CD4-positive, alpha-beta T cell (primary cell): ENCODE measurements at regions of chr5 and their contacts with region 1.

Region 1: GRCh38 chr5:52787600-52788504 is at the starts of genes ITGA1 and PELO:
- DNase-seq: peak in 12 of 14 experiments; percentile 8 to 84 (median 25)
- ATAC-seq: peak; percentile 72
- H3K4me3 ChIP-seq: peak within 1 kb of the TSS; percentile 76
- H3K4me3 Mint-ChIP-seq: peak within 1 kb of the TSS; percentile 89
- H3K27ac ChIP-seq: no peak within 1 kb of the TSS
- H3K27ac Mint-ChIP-seq: peak within 1 kb of the TSS; percentile 16
- H3K4me1 ChIP-seq: peaks cover 18% of the 10 kb centered on the region
- H3K4me1 Mint-ChIP-seq: peaks cover 17% of the 10 kb centered on the region
- H3K27me3 ChIP-seq: peaks cover 0 to 5% of the 10 kb centered on the region in 2 experiments
- H3K27me3 Mint-ChIP-seq: peaks cover 37% of the 10 kb centered on the region
- CTCF ChIP-seq: no peak
- total RNA-seq, gene ITGA1: 0.74 to 1.3 TPM
- total RNA-seq, gene PELO: 4.3 to 4.5 TPM

Region 2: DNA sequence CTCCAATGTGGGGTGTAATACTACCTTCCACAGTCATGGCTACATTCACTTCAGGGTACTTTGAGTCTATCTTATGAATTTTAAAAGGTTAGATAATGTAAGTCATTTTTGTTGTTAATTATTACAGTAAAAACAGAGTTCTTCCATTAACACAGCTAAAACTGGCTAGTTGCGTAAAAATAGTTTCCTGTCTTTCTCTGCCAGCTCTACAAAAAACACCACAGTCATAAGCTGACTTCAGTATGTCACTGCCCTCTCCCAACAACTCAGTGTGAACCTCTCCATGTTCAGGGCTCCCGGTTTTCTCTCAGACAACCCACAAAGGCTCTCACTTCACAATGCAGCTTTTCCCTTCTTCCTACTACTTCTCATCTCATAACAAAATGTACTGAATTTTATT is 85.0 kb before region 1 on chr5:
- CTCF ChIA-PET with region 1: no interaction called
- POLR2A ChIA-PET with region 1: no interaction called
- intact Hi-C with region 1: loop called in 1 of 2 experiments (anchors 5 kb)
- DNase-seq: no peak
- ATAC-seq: no peak
- H3K4me3 ChIP-seq: no peak overlapping the region
- H3K4me3 Mint-ChIP-seq: no peak overlapping the region
- H3K27ac ChIP-seq: no peak overlapping the region
- H3K27ac Mint-ChIP-seq: no peak overlapping the region
- H3K4me1 ChIP-seq: peaks cover 8% of the 10 kb centered on the region
- H3K4me1 Mint-ChIP-seq: peaks cover 20% of the 10 kb centered on the region
- H3K27me3 ChIP-seq: no peaks in the 10 kb centered on the region
- H3K27me3 Mint-ChIP-seq: no peaks in the 10 kb centered on the region
- CTCF ChIP-seq: no peak

Region 3: GRCh38 chr5:52725065-52725746 is 62.6 kb before region 1 on chr5:
- CTCF ChIA-PET with region 1: no interaction called
- POLR2A ChIA-PET with region 1: interaction called, 3 read pairs
- intact Hi-C with region 1: loop called in 1 of 2 experiments (anchors 5 kb)
- DNase-seq: peak in 13 of 14 experiments; percentile 36 to 95 (median 67)
- ATAC-seq: peak; percentile 95
- H3K4me3 ChIP-seq: peak overlapping the region; percentile 15
- H3K4me3 Mint-ChIP-seq: peak overlapping the region; percentile 85
- H3K27ac ChIP-seq: peak overlapping the region; percentile 47 to 63
- H3K27ac Mint-ChIP-seq: peak overlapping the region; percentile 81
- H3K4me1 ChIP-seq: peaks cover 32% of the 10 kb centered on the region
- H3K4me1 Mint-ChIP-seq: peaks cover 57% of the 10 kb centered on the region
- H3K27me3 ChIP-seq: no peaks in the 10 kb centered on the region
- H3K27me3 Mint-ChIP-seq: no peaks in the 10 kb centered on the region
- CTCF ChIP-seq: no peak

Region 4: DNA sequence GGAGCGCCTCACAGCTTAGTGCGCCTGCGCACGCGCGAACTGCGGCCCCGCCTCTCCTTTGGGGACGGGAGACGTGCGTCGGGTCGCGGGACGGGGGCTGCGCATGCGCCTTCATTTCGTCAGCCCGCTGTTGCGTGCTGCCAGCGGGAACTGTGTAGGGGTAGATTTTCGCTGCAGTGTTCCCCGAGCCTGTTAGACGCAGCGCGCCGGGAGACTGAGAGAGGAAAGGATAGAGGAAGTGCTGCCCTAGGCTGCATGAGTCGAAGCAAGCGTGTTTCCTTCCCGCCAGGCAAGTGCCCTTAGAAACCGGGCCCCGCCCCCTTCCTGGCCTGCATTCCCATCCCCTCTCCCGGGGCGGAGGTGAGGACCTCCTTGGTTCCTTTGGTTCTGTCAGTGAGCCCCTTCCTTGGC is 12.1 kb after region 1 on chr5:
- CTCF ChIA-PET with region 1: interaction called, 11 read pairs
- POLR2A ChIA-PET with region 1: interaction called, 13 read pairs
- intact Hi-C with region 1: loop called in 1 of 2 experiments (anchors 1 kb)
- DNase-seq: peak; percentile 90 to 98 (median 94)
- ATAC-seq: peak; percentile 87
- H3K4me3 ChIP-seq: peak overlapping the region; percentile 93
- H3K4me3 Mint-ChIP-seq: peak overlapping the region; percentile 98
- H3K27ac ChIP-seq: peak overlapping the region; percentile 46 to 75
- H3K27ac Mint-ChIP-seq: peak overlapping the region; percentile 88
- H3K4me1 ChIP-seq: peaks cover 29% of the 10 kb centered on the region
- H3K4me1 Mint-ChIP-seq: peaks cover 69% of the 10 kb centered on the region
- H3K27me3 ChIP-seq: no peaks in the 10 kb centered on the region
- H3K27me3 Mint-ChIP-seq: no peaks in the 10 kb centered on the region
- CTCF ChIP-seq: no peak

Region 5: GRCh38 chr5:52915176-52915875 is 127.5 kb after region 1 on chr5:
- CTCF ChIA-PET with region 1: interaction called, 5 read pairs
- POLR2A ChIA-PET with region 1: no interaction called
- intact Hi-C with region 1: loop called (anchors 1 kb)
- DNase-seq: peak; percentile 6 to 80 (median 30)
- ATAC-seq: peak; percentile 92
- H3K4me3 ChIP-seq: no peak overlapping the region
- H3K4me3 Mint-ChIP-seq: peak overlapping the region; percentile 17
- H3K27ac ChIP-seq: no peak overlapping the region
- H3K27ac Mint-ChIP-seq: no peak overlapping the region
- H3K4me1 ChIP-seq: no peaks in the 10 kb centered on the region
- H3K4me1 Mint-ChIP-seq: peaks cover 5% of the 10 kb centered on the region
- H3K27me3 ChIP-seq: no peaks in the 10 kb centered on the region
- H3K27me3 Mint-ChIP-seq: peaks cover 4% of the 10 kb centered on the region
- CTCF ChIP-seq: peak; percentile 87

Region 6: GRCh38 chr5:53089345-53089991 is 301.6 kb after region 1 on chr5:
- CTCF ChIA-PET with region 1: no interaction called
- POLR2A ChIA-PET with region 1: no interaction called
- intact Hi-C with region 1: loop called in 1 of 2 experiments (anchors 5 kb)
- DNase-seq: peak in 3 of 14 experiments; percentile 37 to 59 (median 49)
- ATAC-seq: peak; percentile 88
- H3K4me3 ChIP-seq: no peak overlapping the region
- H3K4me3 Mint-ChIP-seq: peak overlapping the region; percentile 5
- H3K27ac ChIP-seq: no peak overlapping the region
- H3K27ac Mint-ChIP-seq: peak overlapping the region; percentile 4
- H3K4me1 ChIP-seq: peaks cover 6% of the 10 kb centered on the region
- H3K4me1 Mint-ChIP-seq: peaks cover 21% of the 10 kb centered on the region
- H3K27me3 ChIP-seq: no peaks in the 10 kb centered on the region
- H3K27me3 Mint-ChIP-seq: no peaks in the 10 kb centered on the region
- CTCF ChIP-seq: no peak

Region 7: GRCh38 chr5:53095931-53096525 is 308.2 kb after region 1 on chr5:
- CTCF ChIA-PET with region 1: no interaction called
- POLR2A ChIA-PET with region 1: no interaction called
- intact Hi-C with region 1: loop called (anchors 5 kb)
- DNase-seq: peak; percentile 41 to 82 (median 63)
- ATAC-seq: peak; percentile 97
- H3K4me3 ChIP-seq: no peak overlapping the region
- H3K4me3 Mint-ChIP-seq: no peak overlapping the region
- H3K27ac ChIP-seq: no peak overlapping the region
- H3K27ac Mint-ChIP-seq: peak overlapping the region; percentile 10
- H3K4me1 ChIP-seq: no peaks in the 10 kb centered on the region
- H3K4me1 Mint-ChIP-seq: peaks cover 4% of the 10 kb centered on the region
- H3K27me3 ChIP-seq: no peaks in the 10 kb centered on the region
- H3K27me3 Mint-ChIP-seq: no peaks in the 10 kb centered on the region
- CTCF ChIP-seq: peak; percentile 92